ENCODE measurements at regions of chr10 and their contacts with region 1.

Region 1: GRCh38 chr10:112307358-112308124 is 24.3 kb downstream of the TECTB start:
- DNase-seq: peak; percentile 38
- ATAC-seq: peak; percentile 70

Region 2: DNA sequence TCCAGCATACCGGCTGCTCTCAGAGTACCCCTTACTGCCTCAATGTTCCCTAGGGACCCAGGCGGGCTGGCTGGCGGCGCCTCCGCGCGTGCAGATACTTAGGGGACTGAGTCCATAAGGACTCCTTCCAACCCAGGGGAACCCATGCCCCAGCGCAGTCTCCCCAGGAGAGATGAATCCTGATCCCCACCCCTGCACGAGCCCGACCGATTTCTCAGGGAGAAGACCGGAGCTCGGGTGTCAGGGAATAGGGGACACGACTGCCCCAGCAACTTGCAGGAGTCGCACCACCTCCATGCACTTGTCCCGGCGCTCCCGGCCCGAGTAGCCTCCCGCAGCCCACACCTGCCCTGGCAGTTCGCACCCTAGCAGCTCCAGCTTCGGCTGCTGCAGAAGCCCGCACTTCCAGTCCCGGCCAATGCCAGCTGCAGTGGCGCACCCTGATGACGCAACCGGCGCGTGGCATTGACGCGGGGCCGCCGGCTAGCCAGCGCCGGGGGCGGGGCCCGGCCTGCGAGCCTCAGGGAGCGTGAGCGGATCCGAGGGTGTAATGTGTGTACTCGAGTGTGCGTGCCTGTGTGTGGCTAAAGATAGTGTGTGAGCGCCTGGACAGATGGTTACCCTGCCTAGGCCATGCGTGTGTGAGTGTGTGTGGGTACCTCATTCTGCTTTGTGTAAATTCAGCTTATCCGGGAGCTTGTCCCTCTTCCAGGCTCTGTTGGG is 124.1 kb before region 1 on chr10 and contains the start of gene GPAM:
- intact Hi-C with region 1: loop called (anchors 10 kb)
- DNase-seq: peak; percentile 99
- ATAC-seq: peak; percentile 99
- total RNA-seq, gene GPAM: 25.0 TPM